Activated CD4-positive, alpha-beta T cell treated with anti-CD3 and anti-CD28 coated beads, Interleukin-2, amount 10 ng/mL, durations not matched to agents 24 days and 14 days (primary cell): ENCODE measurements at regions of chr17 and their contacts with region 1.

Region 1: GRCh38 chr17:4789901-4790704 is 1.3 kb downstream of the GLTPD2 start:
- DNase-seq: peak; percentile 96
- H3K4me3 Mint-ChIP-seq: peak overlapping the region; percentile 91
- H3K27ac Mint-ChIP-seq: peak overlapping the region; percentile 97
- H3K4me1 Mint-ChIP-seq: peaks cover 15% of the 10 kb centered on the region
- H3K27me3 Mint-ChIP-seq: peaks cover 36% of the 10 kb centered on the region

Region 2: DNA sequence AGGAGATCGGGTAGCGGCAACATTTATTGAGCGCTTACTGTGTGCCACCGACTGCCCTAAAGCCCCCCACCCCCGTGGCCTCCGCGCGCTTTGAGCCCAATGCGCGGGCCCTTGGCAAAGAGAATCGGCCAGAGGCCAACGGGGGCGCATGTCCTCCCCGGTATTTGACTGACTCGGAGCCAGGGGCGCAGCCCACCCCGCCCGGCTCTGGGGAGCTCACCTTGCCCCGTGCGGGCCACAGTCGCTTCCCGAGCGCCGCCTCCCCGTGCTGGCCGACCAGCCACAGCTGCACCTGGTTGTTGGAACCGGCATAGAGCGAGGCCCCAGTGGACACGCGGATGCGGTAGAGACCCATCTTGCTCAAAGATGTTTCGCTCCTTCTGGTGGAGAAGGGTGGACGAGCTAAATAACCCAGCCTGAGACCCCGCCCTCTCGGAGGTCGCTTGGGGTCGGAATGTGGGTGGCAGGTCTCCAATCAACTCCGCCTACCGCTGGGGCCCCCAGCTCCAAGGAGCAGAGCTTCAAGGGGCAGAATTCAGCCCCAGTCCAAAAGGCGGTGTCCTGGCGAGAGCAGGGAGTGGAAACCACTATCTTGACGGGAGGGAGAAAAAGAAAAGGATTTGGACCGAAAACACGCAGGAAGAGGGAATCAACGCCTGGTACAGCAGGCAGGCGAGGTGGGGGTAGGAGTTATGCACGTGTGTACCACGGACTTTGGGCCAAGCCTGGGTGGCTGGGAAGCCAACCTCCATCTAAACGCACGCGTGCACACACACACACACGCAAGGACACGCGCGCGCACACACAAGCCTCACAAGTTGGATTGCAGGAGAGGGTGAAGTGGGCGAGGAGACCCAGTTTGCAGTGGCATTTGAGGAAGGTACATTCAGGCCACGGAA is 148.6 kb before region 1 on chr17 and contains the start of gene ALOX15:
- intact Hi-C with region 1: loop called (anchors 5 kb)
- DNase-seq: no peak
- H3K4me3 Mint-ChIP-seq: peak within 1 kb of the TSS; percentile 57
- H3K27ac Mint-ChIP-seq: no peak within 1 kb of the TSS
- H3K4me1 Mint-ChIP-seq: peaks cover 13% of the 10 kb centered on the region
- H3K27me3 Mint-ChIP-seq: peaks cover 75% of the 10 kb centered on the region
- total RNA-seq, gene ALOX15: not detected in 2 replicates

Region 3: DNA sequence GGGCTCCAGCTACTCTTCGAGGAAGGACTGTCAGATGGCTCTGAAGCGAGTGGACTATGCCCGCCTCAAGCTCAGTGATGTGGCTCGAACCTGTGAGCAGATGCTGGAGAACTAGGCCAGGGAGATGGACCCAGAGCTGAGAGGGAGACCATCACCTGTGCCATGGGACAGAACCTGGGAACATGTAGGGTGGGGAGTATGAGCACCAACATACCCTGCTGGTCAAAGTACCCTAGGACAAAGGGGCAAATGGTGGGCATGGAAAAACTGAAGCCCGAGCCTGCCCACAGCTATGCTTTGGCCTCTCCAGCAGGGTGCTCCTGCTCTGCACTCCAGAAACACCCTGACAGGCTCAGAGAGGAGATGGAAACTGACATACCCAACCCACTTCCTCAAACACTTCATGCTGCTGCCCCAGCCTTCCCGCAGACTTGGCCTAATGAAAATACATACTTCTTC is 57.0 kb before region 1 on chr17:
- intact Hi-C with region 1: loop called (anchors 1 kb)
- DNase-seq: peak; percentile 77
- H3K4me3 Mint-ChIP-seq: peak overlapping the region; percentile 45
- H3K27ac Mint-ChIP-seq: peak overlapping the region; percentile 66
- H3K4me1 Mint-ChIP-seq: peaks cover 38% of the 10 kb centered on the region
- H3K27me3 Mint-ChIP-seq: peaks cover 5% of the 10 kb centered on the region

Region 4: GRCh38 chr17:4806777-4807604 is 16.9 kb after region 1 on chr17 and contains the start of gene PLD2:
- intact Hi-C with region 1: loop called (anchors 2 kb)
- DNase-seq: peak; percentile 97
- H3K4me3 Mint-ChIP-seq: peak within 1 kb of the TSS; percentile 82
- H3K27ac Mint-ChIP-seq: peak within 1 kb of the TSS; percentile 82
- H3K4me1 Mint-ChIP-seq: peaks cover 10% of the 10 kb centered on the region
- H3K27me3 Mint-ChIP-seq: no peaks in the 10 kb centered on the region
- total RNA-seq, gene PLD2: 14.5 and 16.1 TPM in 2 replicates

Region 5: GRCh38 chr17:4891411-4892342 is 101.6 kb after region 1 on chr17:
- intact Hi-C with region 1: loop called (anchors 1 kb)
- DNase-seq: no peak
- H3K4me3 Mint-ChIP-seq: no peak overlapping the region
- H3K27ac Mint-ChIP-seq: no peak overlapping the region
- H3K4me1 Mint-ChIP-seq: no peaks in the 10 kb centered on the region
- H3K27me3 Mint-ChIP-seq: no peaks in the 10 kb centered on the region

Region 6: GRCh38 chr17:4966844-4967538 is 176.9 kb after region 1 on chr17:
- intact Hi-C with region 1: loop called (anchors 10 kb)
- DNase-seq: peak; percentile 98
- H3K4me3 Mint-ChIP-seq: no peak overlapping the region
- H3K27ac Mint-ChIP-seq: peak overlapping the region; percentile 82
- H3K4me1 Mint-ChIP-seq: peaks cover 12% of the 10 kb centered on the region
- H3K27me3 Mint-ChIP-seq: no peaks in the 10 kb centered on the region